Activated T-helper 1 cell treated with anti-CD3 and anti-CD28 coated beads, Interleukin-12 subunit alpha, Interleukin-12 subunit beta, Interleukin-2, Interleukin-4 antibody, amounts not matched to agents 30 ng/mL and 10 ng/mL and 1 ng/mL, durations not matched to agents 14 hours and 24 hours and 36 hours (primary cell): ENCODE measurements at regions of chr9 and their contacts with region 1.

Region 1: DNA sequence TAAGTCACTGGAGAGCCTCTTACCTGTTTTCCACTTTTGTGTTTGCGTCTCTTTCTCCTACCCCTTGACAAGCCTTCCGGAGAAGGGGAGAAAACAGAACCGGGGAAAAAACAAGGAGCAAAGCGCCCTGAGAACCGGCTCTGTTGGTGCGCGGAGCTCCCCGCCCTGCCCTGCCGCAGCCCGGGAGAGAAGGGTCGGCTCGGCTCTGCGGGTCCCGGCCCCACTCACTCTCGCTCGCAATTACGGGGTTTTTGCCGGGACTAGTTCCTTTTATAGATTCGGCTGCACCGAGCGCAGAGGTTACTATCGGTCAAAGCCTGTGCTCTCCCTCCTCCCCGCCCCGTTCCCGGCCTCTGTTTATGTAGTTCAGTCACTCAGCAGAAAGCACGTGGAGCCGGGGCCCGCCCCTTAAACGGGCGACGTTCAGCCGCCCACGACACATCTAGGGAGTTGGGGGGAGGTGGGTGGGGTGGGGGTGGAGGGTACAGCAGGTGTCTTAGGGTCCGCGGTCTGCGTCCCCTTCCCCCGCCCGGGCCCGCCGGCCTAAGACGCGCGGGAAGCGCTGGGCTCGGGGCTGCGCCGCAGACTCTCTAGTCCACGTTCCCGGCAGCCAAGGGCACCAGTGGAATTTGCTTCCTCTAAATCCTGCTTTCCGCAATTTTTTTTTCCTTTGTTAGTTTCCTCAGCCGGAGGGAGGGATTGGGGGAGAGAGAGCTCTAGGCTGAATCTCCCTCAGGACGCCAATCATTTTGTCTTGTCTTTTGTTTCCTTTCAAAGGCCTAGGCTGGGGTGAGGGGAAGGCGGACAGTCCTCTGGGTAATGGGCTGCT is at the start of gene ABCA1:
- DNase-seq: peak; percentile 61
- H3K4me3 Mint-ChIP-seq: peak within 1 kb of the TSS; percentile 86
- H3K27ac Mint-ChIP-seq: peak within 1 kb of the TSS; percentile 51
- H3K4me1 Mint-ChIP-seq: peaks cover 16% of the 10 kb centered on the region
- H3K27me3 Mint-ChIP-seq: peaks cover 16% of the 10 kb centered on the region
- total RNA-seq, gene ABCA1: 1.1 and 1.3 TPM in 2 replicates

Region 2: DNA sequence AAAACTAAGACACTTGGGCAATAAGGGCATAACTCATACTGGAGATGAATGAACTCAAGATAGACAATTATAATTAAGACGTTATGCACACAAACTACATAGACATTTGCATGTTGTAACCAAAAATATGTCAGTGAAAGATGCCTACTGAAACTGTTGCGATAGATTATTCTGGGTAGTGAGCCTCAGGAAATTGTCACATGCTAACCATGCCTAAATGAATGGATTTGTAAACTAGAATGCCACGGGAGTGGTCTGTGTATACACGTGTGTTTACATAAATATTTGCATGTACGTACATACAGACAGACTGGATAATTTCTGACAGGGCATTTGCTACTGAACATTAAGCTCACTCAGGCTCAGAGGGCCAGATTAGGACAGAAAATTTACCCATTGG is 163.0 kb before region 1 on chr9:
- intact Hi-C with region 1: loop called (anchors 10 kb)
- DNase-seq: no peak
- H3K4me3 Mint-ChIP-seq: peak overlapping the region; percentile 91
- H3K27ac Mint-ChIP-seq: no peak overlapping the region
- H3K4me1 Mint-ChIP-seq: peaks cover 8% of the 10 kb centered on the region
- H3K27me3 Mint-ChIP-seq: peaks cover 10% of the 10 kb centered on the region

Region 3: DNA sequence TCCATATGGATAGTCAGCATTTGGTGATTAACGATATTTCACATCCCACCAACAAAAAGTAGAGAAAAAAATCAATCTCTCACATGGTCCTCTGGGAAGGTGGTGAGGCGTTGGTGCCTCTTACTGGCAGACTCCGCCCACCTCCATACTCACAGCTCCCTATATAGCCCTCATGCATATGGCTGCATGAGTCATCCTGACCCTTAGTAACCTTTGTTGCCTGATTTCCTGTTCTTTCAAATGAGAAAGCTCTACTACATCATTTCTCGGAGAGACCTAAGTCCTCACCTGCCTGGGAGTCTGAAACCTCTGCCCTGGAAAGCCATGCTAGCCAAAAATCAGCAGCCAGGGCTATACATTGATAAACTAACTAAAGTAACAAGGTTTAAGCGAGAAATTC is 33.1 kb after region 1 on chr9:
- intact Hi-C with region 1: loop called (anchors 1 kb)
- DNase-seq: peak; percentile 62
- H3K4me3 Mint-ChIP-seq: peak overlapping the region; percentile 19
- H3K27ac Mint-ChIP-seq: peak overlapping the region; percentile 41
- H3K4me1 Mint-ChIP-seq: peaks cover 47% of the 10 kb centered on the region
- H3K27me3 Mint-ChIP-seq: no peaks in the 10 kb centered on the region

Region 4: DNA sequence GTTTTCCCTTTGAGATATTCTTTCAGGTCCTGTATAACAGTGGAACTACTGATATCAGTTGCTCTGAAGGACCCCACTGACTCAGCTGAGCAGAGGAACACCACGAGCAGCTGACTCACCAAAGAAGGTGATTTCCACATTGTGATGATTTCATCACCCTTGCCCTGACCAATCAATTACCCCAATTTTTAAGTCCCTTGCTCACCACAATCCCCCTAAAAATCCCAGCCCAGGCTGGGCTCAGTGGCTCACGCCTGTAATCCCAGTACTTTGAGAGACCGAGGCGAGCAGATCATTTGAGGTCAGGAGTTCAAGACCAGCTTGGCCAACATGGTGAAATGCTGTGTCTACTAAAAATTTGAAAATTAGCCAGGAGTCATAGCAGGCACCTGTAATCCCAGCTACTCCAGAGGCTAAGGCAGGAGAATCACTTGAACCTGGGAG is 125.1 kb after region 1 on chr9:
- intact Hi-C with region 1: loop called (anchors 5 kb)
- DNase-seq: peak; percentile 6
- H3K4me3 Mint-ChIP-seq: peak overlapping the region; percentile 9
- H3K27ac Mint-ChIP-seq: peak overlapping the region; percentile 49
- H3K4me1 Mint-ChIP-seq: peaks cover 26% of the 10 kb centered on the region
- H3K27me3 Mint-ChIP-seq: peaks cover 3% of the 10 kb centered on the region

Region 5: DNA sequence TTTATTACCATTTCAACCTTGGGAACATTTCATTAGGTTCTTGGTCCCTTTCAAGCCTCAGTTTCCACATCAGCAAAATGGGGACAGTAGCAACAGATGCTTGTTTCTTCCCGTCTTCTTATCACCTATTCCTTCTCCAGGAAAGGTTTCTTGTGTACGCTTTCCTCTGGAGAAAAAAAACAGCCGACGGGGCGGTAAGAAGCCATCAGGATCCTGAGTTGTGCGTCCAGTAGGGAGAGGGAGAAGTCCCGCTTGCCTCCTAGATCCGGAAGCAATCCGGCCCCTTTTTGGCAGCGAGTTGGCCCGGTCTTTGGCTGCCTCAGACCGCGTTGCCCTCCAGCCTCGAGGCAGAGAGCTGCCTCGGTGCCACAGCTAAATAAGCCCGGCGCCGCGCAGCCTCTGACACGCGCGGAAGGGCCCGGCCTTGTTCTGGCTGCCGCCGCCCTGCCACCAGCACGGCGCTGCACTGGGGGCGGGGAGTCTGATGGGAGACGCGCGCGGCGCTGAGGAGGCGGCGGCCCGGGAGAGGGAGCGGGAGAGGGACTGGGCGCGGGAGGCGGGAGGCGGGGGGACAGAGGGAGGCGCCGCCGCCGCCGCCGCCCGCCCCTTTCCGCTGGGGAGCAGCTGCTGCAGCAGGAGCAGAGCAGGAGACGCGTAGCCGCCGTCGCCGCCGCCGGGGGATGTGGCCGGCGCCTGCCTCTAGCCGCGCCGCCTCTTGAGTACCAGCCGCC is 316.0 kb after region 1 on chr9 and contains the start of gene SLC44A1:
- intact Hi-C with region 1: loop called (anchors 2 kb)
- DNase-seq: peak; percentile 93
- H3K4me3 Mint-ChIP-seq: peak within 1 kb of the TSS; percentile 88
- H3K27ac Mint-ChIP-seq: peak within 1 kb of the TSS; percentile 69
- H3K4me1 Mint-ChIP-seq: peaks cover 31% of the 10 kb centered on the region
- H3K27me3 Mint-ChIP-seq: peaks cover 62% of the 10 kb centered on the region
- total RNA-seq, gene SLC44A1: 3.7 and 3.8 TPM in 2 replicates

Region 6: GRCh38 chr9:105694190-105694847 is 766.2 kb after region 1 on chr9 and contains the start of gene TMEM38B:
- intact Hi-C with region 1: loop called (anchors 2 kb)
- DNase-seq: peak; percentile 77
- H3K4me3 Mint-ChIP-seq: peak within 1 kb of the TSS; percentile 87
- H3K27ac Mint-ChIP-seq: peak within 1 kb of the TSS; percentile 61
- H3K4me1 Mint-ChIP-seq: peaks cover 26% of the 10 kb centered on the region
- H3K27me3 Mint-ChIP-seq: peaks cover 24% of the 10 kb centered on the region
- total RNA-seq, gene TMEM38B: 11.9 and 13.8 TPM in 2 replicates